Calu3 (cell line): ENCODE measurements at regions of chr21 and their contacts with region 1.

Region 1: DNA sequence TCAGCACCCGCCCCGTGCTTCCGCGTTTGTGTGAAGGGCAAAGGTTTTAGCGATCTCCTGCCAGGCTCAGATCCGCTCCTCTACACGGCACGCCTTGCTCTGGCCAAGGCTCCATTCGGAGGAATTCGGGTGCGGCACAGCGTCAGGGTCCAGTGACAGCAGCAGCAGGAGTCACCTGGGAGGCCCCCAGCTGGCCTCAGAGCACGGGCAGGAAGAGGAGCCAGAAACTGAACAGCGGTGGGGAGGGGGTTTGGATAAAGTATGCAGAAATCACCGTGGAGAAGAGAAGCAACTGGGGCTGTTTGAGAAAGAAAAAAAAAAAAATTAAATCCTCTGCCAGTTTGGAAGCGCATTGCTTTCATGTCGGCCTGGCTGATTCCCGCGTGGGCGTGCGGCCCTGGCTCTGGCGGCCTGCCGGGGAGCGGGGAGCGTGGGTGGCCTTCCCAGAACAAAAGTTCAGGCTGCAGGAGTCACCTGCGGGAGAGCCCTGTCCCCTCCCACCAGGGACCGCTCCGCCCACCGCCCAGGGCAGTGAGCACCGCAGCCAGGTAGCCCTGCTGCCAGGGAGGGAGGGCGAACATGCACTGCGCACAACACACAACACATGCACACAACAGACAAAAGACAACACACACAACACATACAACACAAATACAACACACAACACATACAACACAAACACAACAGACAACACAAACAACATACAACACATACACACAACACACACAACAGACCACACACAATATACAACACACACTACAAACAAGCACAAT is 107.6 kb downstream of the ETS2 start:
- DNase-seq: peak; percentile 85
- H3K4me3 Mint-ChIP-seq: no peak overlapping the region
- H3K27ac Mint-ChIP-seq: no peak overlapping the region
- H3K4me1 Mint-ChIP-seq: peaks cover 45% of the 10 kb centered on the region
- H3K27me3 Mint-ChIP-seq: no peaks in the 10 kb centered on the region
- CTCF ChIP-seq: no peak

Region 2: DNA sequence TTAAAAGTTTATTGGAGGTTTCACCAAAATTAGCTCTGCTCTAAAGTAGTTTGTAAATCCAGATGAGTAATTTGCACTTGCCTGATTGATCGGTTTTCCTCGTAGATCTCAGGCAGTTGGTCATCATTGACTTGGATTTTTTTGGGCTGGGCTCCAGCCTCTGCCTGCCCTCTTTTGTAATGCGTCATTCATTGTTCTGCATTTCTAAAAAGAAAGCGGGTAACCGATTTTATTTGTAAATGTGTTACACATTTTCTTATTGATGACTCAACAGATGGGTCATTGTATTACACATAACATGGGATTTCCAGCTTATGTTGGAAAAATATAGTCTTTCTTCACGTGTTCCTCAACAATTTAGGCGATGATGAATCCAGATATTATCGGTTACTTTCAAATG is 102.0 kb before region 1 on chr21:
- CTCF ChIA-PET with region 1: no interaction called
- intact Hi-C with region 1: loop called (anchors 5 kb)
- DNase-seq: peak; percentile 46
- H3K4me3 Mint-ChIP-seq: peak overlapping the region; percentile 34
- H3K27ac Mint-ChIP-seq: peak overlapping the region; percentile 78
- H3K4me1 Mint-ChIP-seq: peaks cover 39% of the 10 kb centered on the region
- H3K27me3 Mint-ChIP-seq: no peaks in the 10 kb centered on the region
- CTCF ChIP-seq: no peak

Region 3: GRCh38 chr21:38831526-38832467 is 81.5 kb before region 1 on chr21:
- CTCF ChIA-PET with region 1: no interaction called
- intact Hi-C with region 1: loop called (anchors 5 kb)
- DNase-seq: peak; percentile 59
- H3K4me3 Mint-ChIP-seq: no peak overlapping the region
- H3K27ac Mint-ChIP-seq: peak overlapping the region; percentile 82
- H3K4me1 Mint-ChIP-seq: peaks cover 22% of the 10 kb centered on the region
- H3K27me3 Mint-ChIP-seq: no peaks in the 10 kb centered on the region
- CTCF ChIP-seq: no peak

Region 4: DNA sequence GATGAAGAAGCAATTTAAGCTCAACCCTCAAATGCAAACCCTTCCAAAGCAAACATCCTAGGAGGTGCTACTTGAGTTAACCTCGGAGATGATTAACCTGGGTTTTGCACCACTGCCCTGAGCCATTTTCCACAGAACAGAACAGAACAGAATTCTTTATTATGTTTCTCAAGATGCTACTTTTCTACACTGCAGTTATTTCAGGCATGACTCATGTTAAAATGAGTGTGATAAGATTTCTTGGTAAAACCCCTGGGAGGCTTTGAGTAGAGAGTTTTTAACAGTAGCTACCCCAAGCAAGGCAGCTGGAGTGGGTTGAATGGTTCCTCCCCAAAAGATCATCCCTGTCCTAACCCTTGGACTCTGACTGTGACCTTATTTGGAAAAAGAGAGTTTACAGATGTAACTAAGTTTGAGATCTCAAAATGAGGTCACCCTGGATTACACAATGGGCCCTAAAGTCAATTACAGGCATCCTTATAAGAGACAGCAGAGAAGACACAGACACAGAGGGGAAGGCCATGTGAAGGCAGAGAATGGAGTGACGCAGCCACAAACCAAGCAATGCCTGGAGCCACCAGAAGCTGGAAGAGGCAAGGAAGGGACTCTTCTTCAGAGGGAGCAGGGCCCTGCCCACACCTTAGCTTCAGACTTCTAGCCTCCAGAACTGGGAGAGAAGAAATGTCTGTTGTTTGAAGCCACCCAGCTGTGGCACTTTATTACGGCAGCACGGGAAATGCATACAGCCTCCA is 45.8 kb after region 1 on chr21:
- CTCF ChIA-PET with region 1: interaction called, 3 read pairs
- intact Hi-C with region 1: loop called (anchors 5 kb)
- DNase-seq: peak; percentile 13
- H3K4me3 Mint-ChIP-seq: no peak overlapping the region
- H3K27ac Mint-ChIP-seq: no peak overlapping the region
- H3K4me1 Mint-ChIP-seq: peaks cover 47% of the 10 kb centered on the region
- H3K27me3 Mint-ChIP-seq: no peaks in the 10 kb centered on the region
- CTCF ChIP-seq: no peak

Region 5: GRCh38 chr21:39125752-39126485 is 212.6 kb after region 1 on chr21:
- CTCF ChIA-PET with region 1: no interaction called
- intact Hi-C with region 1: loop called (anchors 10 kb)
- DNase-seq: peak; percentile 44
- H3K4me3 Mint-ChIP-seq: no peak overlapping the region
- H3K27ac Mint-ChIP-seq: no peak overlapping the region
- H3K4me1 Mint-ChIP-seq: no peaks in the 10 kb centered on the region
- H3K27me3 Mint-ChIP-seq: no peaks in the 10 kb centered on the region
- CTCF ChIP-seq: peak; percentile 24

Region 6: GRCh38 chr21:39238275-39238674 is 325.0 kb after region 1 on chr21:
- CTCF ChIA-PET with region 1: no interaction called
- intact Hi-C with region 1: no loop called
- DNase-seq: no peak
- H3K4me3 Mint-ChIP-seq: no peak overlapping the region
- H3K27ac Mint-ChIP-seq: no peak overlapping the region
- H3K4me1 Mint-ChIP-seq: no peaks in the 10 kb centered on the region
- H3K27me3 Mint-ChIP-seq: no peaks in the 10 kb centered on the region
- CTCF ChIP-seq: no peak

Region 7: DNA sequence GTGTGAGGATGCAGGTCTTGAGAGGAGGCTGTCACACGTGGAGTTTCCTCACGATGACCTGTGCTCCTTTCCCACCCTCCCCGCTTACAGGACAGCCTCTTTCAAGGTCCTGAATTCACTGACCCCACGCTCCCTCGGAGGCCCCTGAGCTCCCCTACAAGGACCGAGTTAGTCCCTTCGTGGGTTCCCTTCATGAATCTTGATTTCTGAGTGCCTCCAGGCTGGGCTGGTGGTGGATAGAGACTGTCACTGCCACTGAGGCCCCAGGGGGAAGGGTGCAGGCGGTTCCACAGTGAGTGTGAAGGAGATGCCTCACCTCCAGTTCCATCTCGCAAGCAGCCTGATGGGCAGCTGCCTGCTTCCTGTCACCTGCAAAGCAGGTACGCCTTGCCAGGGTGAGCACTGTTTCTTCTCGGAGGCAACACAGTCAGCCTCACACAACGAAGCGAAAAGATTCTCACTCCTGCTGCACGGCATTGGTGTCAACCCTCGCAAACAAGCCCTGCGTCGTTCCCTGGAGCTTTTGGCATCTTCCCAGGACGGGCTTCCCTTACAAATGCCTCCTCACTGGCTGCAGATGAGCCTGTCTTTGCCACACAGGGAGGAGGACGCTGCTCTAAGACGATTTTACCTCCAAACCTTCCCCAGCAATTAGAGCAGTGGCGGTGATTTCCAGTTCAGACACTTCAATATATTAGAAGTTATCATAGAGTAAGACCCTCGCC is 927.2 kb after region 1 on chr21:
- CTCF ChIA-PET with region 1: no interaction called
- intact Hi-C with region 1: no loop called
- DNase-seq: no peak
- H3K4me3 Mint-ChIP-seq: no peak overlapping the region
- H3K27ac Mint-ChIP-seq: no peak overlapping the region
- H3K4me1 Mint-ChIP-seq: no peaks in the 10 kb centered on the region
- H3K27me3 Mint-ChIP-seq: peaks cover 31% of the 10 kb centered on the region
- CTCF ChIP-seq: no peak